Activated CD4-positive, alpha-beta T cell treated with anti-CD3 and anti-CD28 coated beads for 36 hours (primary cell): ENCODE measurements at regions of chr6 and their contacts with region 1.

Region 1: GRCh38 chr6:166798652-166799051 is 157.7 kb downstream of the RNASET2 start:
- DNase-seq: no peak
- ATAC-seq: no peak
- H3K4me3 Mint-ChIP-seq: no peak overlapping the region
- H3K27ac Mint-ChIP-seq: no peak overlapping the region
- H3K4me1 Mint-ChIP-seq: no peaks in the 10 kb centered on the region
- H3K27me3 Mint-ChIP-seq: no peaks in the 10 kb centered on the region

Region 2: GRCh38 chr6:166824146-166824879 is 25.7 kb after region 1 on chr6:
- CTCF ChIA-PET with region 1: no interaction called
- POLR2A ChIA-PET with region 1: no interaction called
- intact Hi-C with region 1: no loop called
- DNase-seq: no peak
- ATAC-seq: no peak
- H3K4me3 Mint-ChIP-seq: no peak overlapping the region
- H3K27ac Mint-ChIP-seq: no peak overlapping the region
- H3K4me1 Mint-ChIP-seq: no peaks in the 10 kb centered on the region
- H3K27me3 Mint-ChIP-seq: peaks cover 2% of the 10 kb centered on the region

Region 3: GRCh38 chr6:166862287-166862977 is 63.8 kb after region 1 on chr6:
- CTCF ChIA-PET with region 1: no interaction called
- POLR2A ChIA-PET with region 1: no interaction called
- intact Hi-C with region 1: loop called in 1 of 2 experiments (anchors 5 kb)
- DNase-seq: peak; percentile 57
- ATAC-seq: peak; percentile 83
- H3K4me3 Mint-ChIP-seq: peak overlapping the region; percentile 73
- H3K27ac Mint-ChIP-seq: no peak overlapping the region
- H3K4me1 Mint-ChIP-seq: peaks cover 7% of the 10 kb centered on the region
- H3K27me3 Mint-ChIP-seq: peaks cover 8% of the 10 kb centered on the region